CD4-positive, alpha-beta memory T cell (primary cell): ENCODE measurements at regions of chr16 and their contacts with region 1.

Region 1: GRCh38 chr16:65671-66137 is 6.7 kb downstream of the RHBDF1 start:
- DNase-seq: peak; percentile 75 to 81 (median 77)
- H3K4me3 ChIP-seq: no peak overlapping the region
- H3K4me3 Mint-ChIP-seq: no peak overlapping the region
- H3K27ac ChIP-seq: no peak overlapping the region
- H3K27ac Mint-ChIP-seq: no peak overlapping the region
- H3K4me1 ChIP-seq: no peaks in the 10 kb centered on the region
- H3K4me1 Mint-ChIP-seq: peaks cover 0 to 6% (median 3%) of the 10 kb centered on the region in 4 donors
- H3K27me3 ChIP-seq: no peaks in the 10 kb centered on the region
- H3K27me3 Mint-ChIP-seq: peaks cover 2 to 6% of the 10 kb centered on the region in 2 donors

Region 2: DNA sequence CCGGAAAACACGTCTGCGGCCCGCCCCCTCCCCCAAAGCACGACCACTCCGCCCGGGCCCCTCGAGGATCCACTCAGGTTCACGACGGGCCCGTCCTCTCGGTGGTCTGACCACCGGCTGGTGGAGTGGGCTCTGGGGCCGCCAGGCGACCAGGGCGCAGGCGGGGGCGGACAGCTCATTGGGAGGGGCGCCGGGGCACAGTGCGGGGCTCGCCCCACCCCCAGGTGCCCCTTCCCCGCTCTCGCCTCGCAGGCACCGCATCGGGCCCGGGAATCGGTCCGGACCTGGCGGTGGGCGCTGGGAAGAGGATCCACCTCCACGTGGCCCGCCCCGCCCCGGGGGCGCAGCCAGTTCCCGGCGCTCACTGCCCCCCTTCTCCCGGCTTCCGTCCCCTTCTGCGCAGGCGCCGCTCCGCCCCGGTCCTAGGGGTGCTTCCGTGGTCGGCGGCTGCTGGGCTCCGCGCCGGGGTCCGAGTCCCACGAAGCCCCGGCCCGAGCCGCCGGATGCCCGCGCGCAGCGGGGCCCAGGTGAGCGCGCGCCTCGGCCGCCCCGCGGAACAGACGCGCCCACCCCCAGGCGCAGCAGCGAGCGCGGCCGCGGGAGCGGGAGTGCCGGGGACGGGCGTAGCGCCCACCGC is 12.2 kb after region 1 on chr16 and contains the start of gene MPG:
- CTCF ChIA-PET with region 1: interaction called, 18 read pairs
- POLR2A ChIA-PET with region 1: interaction called, 5 read pairs
- intact Hi-C with region 1: no loop called
- DNase-seq: peak; percentile 78 to 84 (median 79)
- H3K4me3 ChIP-seq: peak within 1 kb of the TSS; percentile 49 to 52
- H3K4me3 Mint-ChIP-seq: peak within 1 kb of the TSS; percentile 86 to 91 (median 90)
- H3K27ac ChIP-seq: peak within 1 kb of the TSS; percentile 65
- H3K27ac Mint-ChIP-seq: peak within 1 kb of the TSS; percentile 68 to 91 (median 78)
- H3K4me1 ChIP-seq: peaks cover 26% of the 10 kb centered on the region
- H3K4me1 Mint-ChIP-seq: peaks cover 11 to 41% (median 30%) of the 10 kb centered on the region in 4 donors
- H3K27me3 ChIP-seq: peaks cover 6% of the 10 kb centered on the region
- H3K27me3 Mint-ChIP-seq: peaks cover 4% of the 10 kb centered on the region in 2 donors
- total RNA-seq, gene MPG: 30.7 TPM

Region 3: DNA sequence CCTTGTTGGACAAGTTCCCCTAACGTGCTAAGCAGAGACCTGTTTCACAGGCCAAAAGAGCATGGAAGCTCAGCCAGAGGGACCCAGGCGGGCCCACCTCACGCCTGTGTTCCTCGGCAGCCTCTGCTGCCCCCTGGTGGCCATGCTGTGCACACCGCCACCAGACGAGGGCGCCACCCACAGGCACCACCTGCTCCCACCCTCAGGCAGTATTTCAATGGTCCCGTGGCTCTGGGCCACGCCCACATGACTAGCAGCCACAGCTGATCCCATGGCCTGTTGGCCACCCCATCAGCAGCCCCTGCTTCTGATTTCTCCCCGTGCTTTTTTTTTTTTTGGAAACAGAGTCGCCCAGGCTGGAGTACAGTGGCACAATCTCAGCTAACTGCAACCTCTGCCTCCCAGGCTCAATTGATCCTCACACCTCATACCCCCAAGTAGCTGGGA is 31.3 kb after region 1 on chr16:
- CTCF ChIA-PET with region 1: interaction called, 165 read pairs
- POLR2A ChIA-PET with region 1: interaction called, 8 read pairs
- intact Hi-C with region 1: loop called (anchors 1 kb)
- DNase-seq: peak; percentile 87 to 89 (median 87)
- H3K4me3 ChIP-seq: no peak overlapping the region
- H3K4me3 Mint-ChIP-seq: no peak overlapping the region
- H3K27ac ChIP-seq: no peak overlapping the region
- H3K27ac Mint-ChIP-seq: peak overlapping the region in 4 of 7 donors; percentile 4 to 67 (median 60)
- H3K4me1 ChIP-seq: no peaks in the 10 kb centered on the region
- H3K4me1 Mint-ChIP-seq: peaks cover 3 to 6% (median 4%) of the 10 kb centered on the region in 4 donors
- H3K27me3 ChIP-seq: no peaks in the 10 kb centered on the region
- H3K27me3 Mint-ChIP-seq: no peaks in the 10 kb centered on the region

Region 4: DNA sequence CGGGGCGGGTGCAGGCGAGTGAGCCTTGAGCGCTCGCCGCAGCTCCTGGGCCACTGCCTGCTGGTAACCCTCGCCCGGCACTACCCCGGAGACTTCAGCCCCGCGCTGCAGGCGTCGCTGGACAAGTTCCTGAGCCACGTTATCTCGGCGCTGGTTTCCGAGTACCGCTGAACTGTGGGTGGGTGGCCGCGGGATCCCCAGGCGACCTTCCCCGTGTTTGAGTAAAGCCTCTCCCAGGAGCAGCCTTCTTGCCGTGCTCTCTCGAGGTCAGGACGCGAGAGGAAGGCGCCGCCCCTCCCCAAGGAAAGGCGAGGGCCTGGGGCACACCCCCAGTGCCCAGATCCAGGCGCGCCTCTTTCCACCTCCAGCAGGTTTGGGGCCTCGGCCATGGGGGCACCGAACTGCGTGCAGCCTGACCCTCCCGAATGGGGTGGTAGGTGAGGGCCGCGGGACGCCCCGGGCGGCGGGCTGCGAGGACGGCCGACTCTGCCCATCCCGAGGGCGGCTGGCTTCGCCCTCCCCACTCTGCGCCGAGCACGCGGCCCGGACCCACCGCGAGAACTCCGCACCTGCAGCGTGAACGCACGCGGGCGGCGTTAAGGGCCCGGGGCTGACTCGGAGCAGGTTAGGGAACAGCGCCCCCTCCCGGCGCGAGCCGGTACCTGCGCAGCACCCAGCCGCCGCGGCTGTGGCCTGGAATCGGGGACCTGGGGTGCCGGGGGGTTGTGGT is 115.4 kb after region 1 on chr16:
- CTCF ChIA-PET with region 1: interaction called, 4 read pairs
- POLR2A ChIA-PET with region 1: interaction called, 3 read pairs
- intact Hi-C with region 1: loop called (anchors 1 kb)
- DNase-seq: peak; percentile 79 to 84 (median 82)
- H3K4me3 ChIP-seq: peak overlapping the region in 1 of 2 donors; percentile 41
- H3K4me3 Mint-ChIP-seq: peak overlapping the region in 4 of 8 donors; percentile 31 to 63 (median 48)
- H3K27ac ChIP-seq: no peak overlapping the region
- H3K27ac Mint-ChIP-seq: peak overlapping the region in 2 of 7 donors; percentile 40 to 70
- H3K4me1 ChIP-seq: peaks cover 21% of the 10 kb centered on the region
- H3K4me1 Mint-ChIP-seq: peaks cover 2 to 16% (median 9%) of the 10 kb centered on the region in 4 donors
- H3K27me3 ChIP-seq: peaks cover 24% of the 10 kb centered on the region
- H3K27me3 Mint-ChIP-seq: peaks cover 12 to 18% of the 10 kb centered on the region in 2 donors